ENCODE measurements at regions of chr2 and their contacts with region 1.

Region 1: GRCh38 chr2:10331027-10331701 is 28.5 kb downstream of the HPCAL1 start:
- DNase-seq: peak; percentile 59 to 78 (median 67)
- H3K4me3 ChIP-seq: peak overlapping the region; percentile 86
- H3K4me3 Mint-ChIP-seq: peak overlapping the region; percentile 90 to 93 (median 92)
- H3K27ac ChIP-seq: peak overlapping the region; percentile 76
- H3K27ac Mint-ChIP-seq: peak overlapping the region; percentile 89 to 98 (median 94)
- H3K4me1 ChIP-seq: peaks cover 76% of the 10 kb centered on the region
- H3K4me1 Mint-ChIP-seq: peaks cover 80 to 89% (median 88%) of the 10 kb centered on the region in 3 donors
- H3K27me3 ChIP-seq: no peaks in the 10 kb centered on the region
- H3K27me3 Mint-ChIP-seq: peaks cover 0 to 2% of the 10 kb centered on the region in 2 donors

Region 2: GRCh38 chr2:10235099-10235908 is 95.9 kb before region 1 on chr2:
- CTCF ChIA-PET with region 1: no interaction called
- POLR2A ChIA-PET with region 1: no interaction called
- DNase-seq: peak in 1 of 5 donors; percentile 46
- H3K4me3 ChIP-seq: no peak overlapping the region
- H3K4me3 Mint-ChIP-seq: no peak overlapping the region
- H3K27ac ChIP-seq: no peak overlapping the region
- H3K27ac Mint-ChIP-seq: no peak overlapping the region
- H3K4me1 ChIP-seq: no peaks in the 10 kb centered on the region
- H3K4me1 Mint-ChIP-seq: peaks cover 4 to 13% (median 4%) of the 10 kb centered on the region in 3 donors
- H3K27me3 ChIP-seq: no peaks in the 10 kb centered on the region
- H3K27me3 Mint-ChIP-seq: peaks cover 2 to 3% of the 10 kb centered on the region in 2 donors

Region 3: DNA sequence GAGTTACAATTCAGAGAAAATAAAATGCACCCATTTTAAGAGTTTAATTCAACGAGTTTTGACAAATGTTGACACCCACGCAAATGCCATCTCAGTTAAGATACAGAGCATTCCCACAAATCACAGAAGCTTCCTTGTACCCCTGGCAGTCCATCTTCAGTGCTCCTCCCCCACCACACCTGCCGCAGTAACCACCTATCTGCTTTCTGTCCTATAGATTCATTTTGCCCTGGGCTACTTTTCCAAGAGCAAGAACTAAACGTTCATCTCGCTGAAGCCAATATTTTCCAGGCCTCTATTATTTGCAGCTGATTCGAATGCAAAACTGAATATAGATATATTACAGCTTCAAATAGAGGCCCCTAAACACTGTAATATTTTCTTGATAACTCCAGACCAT is 41.8 kb before region 1 on chr2:
- CTCF ChIA-PET with region 1: no interaction called
- POLR2A ChIA-PET with region 1: no interaction called
- DNase-seq: no peak
- H3K4me3 ChIP-seq: no peak overlapping the region
- H3K4me3 Mint-ChIP-seq: no peak overlapping the region
- H3K27ac ChIP-seq: no peak overlapping the region
- H3K27ac Mint-ChIP-seq: no peak overlapping the region
- H3K4me1 ChIP-seq: no peaks in the 10 kb centered on the region
- H3K4me1 Mint-ChIP-seq: no peaks in the 10 kb centered on the region
- H3K27me3 ChIP-seq: no peaks in the 10 kb centered on the region
- H3K27me3 Mint-ChIP-seq: no peaks in the 10 kb centered on the region

Region 4: GRCh38 chr2:10302479-10303180 is 28.5 kb before region 1 on chr2 and contains the start of gene HPCAL1:
- CTCF ChIA-PET with region 1: interaction called, 87 read pairs
- POLR2A ChIA-PET with region 1: interaction called, 52 read pairs
- DNase-seq: peak; percentile 80 to 86 (median 83)
- H3K4me3 ChIP-seq: peak within 1 kb of the TSS; percentile 76
- H3K4me3 Mint-ChIP-seq: peak within 1 kb of the TSS; percentile 97 to 99 (median 97)
- H3K27ac ChIP-seq: peak within 1 kb of the TSS; percentile 54
- H3K27ac Mint-ChIP-seq: peak within 1 kb of the TSS; percentile 76 to 97 (median 94)
- H3K4me1 ChIP-seq: peaks cover 60% of the 10 kb centered on the region
- H3K4me1 Mint-ChIP-seq: peaks cover 63 to 78% (median 76%) of the 10 kb centered on the region in 3 donors
- H3K27me3 ChIP-seq: no peaks in the 10 kb centered on the region
- H3K27me3 Mint-ChIP-seq: peaks cover 0 to 2% of the 10 kb centered on the region in 2 donors
- total RNA-seq, gene HPCAL1: 44.1 to 47.6 TPM

Region 5: GRCh38 chr2:10307561-10308156 is 23.5 kb before region 1 on chr2:
- CTCF ChIA-PET with region 1: interaction called, 87 read pairs
- POLR2A ChIA-PET with region 1: interaction called, 52 read pairs
- DNase-seq: no peak
- H3K4me3 ChIP-seq: no peak overlapping the region
- H3K4me3 Mint-ChIP-seq: peak overlapping the region in 4 of 7 donors; percentile 24 to 75 (median 58)
- H3K27ac ChIP-seq: peak overlapping the region; percentile 18
- H3K27ac Mint-ChIP-seq: peak overlapping the region in 5 of 8 donors; percentile 1 to 85 (median 72)
- H3K4me1 ChIP-seq: peaks cover 61% of the 10 kb centered on the region
- H3K4me1 Mint-ChIP-seq: peaks cover 55 to 61% (median 57%) of the 10 kb centered on the region in 3 donors
- H3K27me3 ChIP-seq: no peaks in the 10 kb centered on the region
- H3K27me3 Mint-ChIP-seq: peaks cover 0 to 2% of the 10 kb centered on the region in 2 donors